ENCODE measurements at regions of chr17 and their contacts with region 1.

Region 1: GRCh38 chr17:2511462-2512369 is at the start of gene METTL16:
- DNase-seq: peak; percentile 95
- H3K4me3 Mint-ChIP-seq: no peak within 1 kb of the TSS
- H3K27ac Mint-ChIP-seq: peak within 1 kb of the TSS; percentile 9
- H3K4me1 Mint-ChIP-seq: peaks cover 11% of the 10 kb centered on the region
- H3K27me3 Mint-ChIP-seq: peaks cover 3% of the 10 kb centered on the region
- total RNA-seq, gene METTL16: 53.9 and 57.9 TPM in 2 replicates

Region 2: GRCh38 chr17:1078831-1079561 is 1432.7 kb before region 1 on chr17:
- intact Hi-C with region 1: no loop called
- DNase-seq: no peak
- H3K4me3 Mint-ChIP-seq: no peak overlapping the region
- H3K27ac Mint-ChIP-seq: no peak overlapping the region
- H3K4me1 Mint-ChIP-seq: no peaks in the 10 kb centered on the region
- H3K27me3 Mint-ChIP-seq: no peaks in the 10 kb centered on the region

Region 3: GRCh38 chr17:2459917-2460271 is 51.8 kb before region 1 on chr17:
- intact Hi-C with region 1: loop called (anchors 5 kb)
- DNase-seq: no peak
- H3K4me3 Mint-ChIP-seq: no peak overlapping the region
- H3K27ac Mint-ChIP-seq: peak overlapping the region; percentile 26
- H3K4me1 Mint-ChIP-seq: peaks cover 18% of the 10 kb centered on the region
- H3K27me3 Mint-ChIP-seq: no peaks in the 10 kb centered on the region

Region 4: DNA sequence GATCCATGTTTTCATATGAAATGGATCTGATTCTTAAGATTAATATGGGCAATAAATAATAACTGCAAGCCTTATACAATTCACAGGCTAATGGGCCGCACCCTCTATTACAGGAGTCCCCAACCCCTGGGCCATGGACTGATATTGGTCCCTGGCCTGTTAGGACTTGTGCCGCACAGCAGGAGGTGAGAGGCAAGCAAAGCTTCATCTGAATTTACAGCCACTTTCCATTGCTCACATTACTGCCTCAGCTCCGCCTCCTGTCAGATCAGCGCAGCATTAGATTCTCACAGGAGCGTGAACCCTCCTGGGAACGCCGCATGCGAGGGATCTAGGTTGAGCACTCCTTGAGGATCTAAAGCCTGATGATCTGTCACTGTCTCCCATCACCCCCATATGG is 26.8 kb before region 1 on chr17:
- intact Hi-C with region 1: no loop called
- DNase-seq: no peak
- H3K4me3 Mint-ChIP-seq: no peak overlapping the region
- H3K27ac Mint-ChIP-seq: no peak overlapping the region
- H3K4me1 Mint-ChIP-seq: peaks cover 7% of the 10 kb centered on the region
- H3K27me3 Mint-ChIP-seq: no peaks in the 10 kb centered on the region

Region 5: GRCh38 chr17:2672026-2672425 is 160.3 kb after region 1 on chr17:
- intact Hi-C with region 1: loop called (anchors 1 kb)
- DNase-seq: no peak
- H3K4me3 Mint-ChIP-seq: no peak overlapping the region
- H3K27ac Mint-ChIP-seq: no peak overlapping the region
- H3K4me1 Mint-ChIP-seq: peaks cover 10% of the 10 kb centered on the region
- H3K27me3 Mint-ChIP-seq: no peaks in the 10 kb centered on the region

Region 6: GRCh38 chr17:2688351-2689342 is 176.9 kb after region 1 on chr17:
- intact Hi-C with region 1: no loop called
- DNase-seq: no peak
- H3K4me3 Mint-ChIP-seq: no peak overlapping the region
- H3K27ac Mint-ChIP-seq: no peak overlapping the region
- H3K4me1 Mint-ChIP-seq: no peaks in the 10 kb centered on the region
- H3K27me3 Mint-ChIP-seq: no peaks in the 10 kb centered on the region

Region 7: GRCh38 chr17:2711601-2712299 is 200.0 kb after region 1 on chr17 and contains the start of gene CLUH:
- intact Hi-C with region 1: loop called (anchors 1 kb)
- DNase-seq: peak; percentile 96
- H3K4me3 Mint-ChIP-seq: peak within 1 kb of the TSS; percentile 95
- H3K27ac Mint-ChIP-seq: peak within 1 kb of the TSS; percentile 92
- H3K4me1 Mint-ChIP-seq: peaks cover 32% of the 10 kb centered on the region
- H3K27me3 Mint-ChIP-seq: no peaks in the 10 kb centered on the region
- total RNA-seq, gene CLUH: 173 and 179 TPM in 2 replicates

Region 8: DNA sequence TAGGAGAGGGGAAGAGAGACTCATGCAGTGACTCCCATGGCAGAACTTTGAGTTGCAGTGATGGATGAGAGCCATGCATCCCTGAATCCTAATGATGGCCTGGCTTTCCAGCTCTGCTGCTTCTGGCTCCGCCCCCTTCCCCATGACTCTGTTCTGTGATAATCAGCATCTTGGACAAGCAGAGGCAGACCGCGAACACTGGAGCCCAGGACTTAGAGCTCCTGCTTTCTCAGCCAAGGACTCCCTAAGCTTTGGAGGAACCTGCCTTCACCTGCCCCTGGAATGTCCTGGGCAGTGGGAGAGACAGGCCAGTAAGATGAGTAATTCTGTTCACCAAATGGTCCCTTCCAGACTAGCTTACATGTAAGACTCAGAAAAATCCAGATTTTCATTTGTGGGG is 225.2 kb after region 1 on chr17:
- intact Hi-C with region 1: no loop called
- DNase-seq: no peak
- H3K4me3 Mint-ChIP-seq: no peak overlapping the region
- H3K27ac Mint-ChIP-seq: no peak overlapping the region
- H3K4me1 Mint-ChIP-seq: no peaks in the 10 kb centered on the region
- H3K27me3 Mint-ChIP-seq: no peaks in the 10 kb centered on the region

Measured in activated T-helper 1 cell treated with anti-CD3 and anti-CD28 coated beads, Interleukin-12 subunit alpha, Interleukin-12 subunit beta, Interleukin-2, Interleukin-4 antibody, amounts not matched to agents 30 ng/mL and 10 ng/mL and 1 ng/mL, durations not matched to agents 14 hours and 24 hours and 36 hours (primary cell).